GM12878 (cell line): ENCODE measurements at regions of chr14 and their contacts with region 1.

Region 1: GRCh38 chr14:24978862-24979724 is 70.9 kb downstream of the STXBP6 start:
- DNase-seq: peak; percentile 46
- ATAC-seq: peak; percentile 81
- H3K4me3 ChIP-seq: no peak overlapping the region
- H3K27ac ChIP-seq: peak overlapping the region; percentile 18; the same call in 1 of the 2 replicates
- H3K4me1 ChIP-seq: peaks cover 5% of the 10 kb centered on the region; the same call in 1 of the 2 replicates
- H3K27me3 ChIP-seq: no peaks in the 10 kb centered on the region
- CTCF ChIP-seq: no peak
- EP300 ChIP-seq: peak; percentile 21 to 66; a peak in 2 of 4 replicates
- POLR2A ChIP-seq: no peak
- RAD21 ChIP-seq: no peak

Region 2: DNA sequence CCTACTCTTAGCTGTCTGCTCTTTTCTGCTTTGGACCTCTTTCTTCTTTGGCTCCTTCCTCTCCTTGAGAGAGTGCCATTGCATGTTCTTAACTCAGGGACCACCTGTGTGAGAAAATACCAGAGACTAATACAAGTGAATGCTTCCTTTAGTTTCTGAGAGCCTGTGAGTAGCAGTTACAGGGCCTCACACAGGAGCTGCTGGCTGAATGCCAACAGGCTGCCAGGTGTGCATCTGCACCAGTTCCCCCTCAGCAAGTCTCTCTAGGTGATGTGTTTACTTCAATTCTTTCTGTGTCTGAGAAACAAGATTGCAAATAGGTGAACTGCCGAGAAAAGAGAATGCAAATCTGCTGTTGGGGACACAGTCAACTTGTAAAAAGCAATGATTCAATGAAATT is 37.4 kb before region 1 on chr14:
- CTCF ChIA-PET with region 1: interaction called, 3 read pairs
- POLR2A ChIA-PET with region 1: no interaction called
- RAD21 ChIA-PET with region 1: interaction called, 12 read pairs
- SMC1A ChIA-PET with region 1: interaction called, 44 read pairs
- in situ Hi-C with region 1: no loop called
- intact Hi-C with region 1: loop called (anchors 5 kb)
- DNase-seq: no peak
- ATAC-seq: peak; percentile 36
- H3K4me3 ChIP-seq: no peak overlapping the region
- H3K27ac ChIP-seq: peak overlapping the region; percentile 30; the same call in 1 of the 2 replicates
- H3K4me1 ChIP-seq: no peaks in the 10 kb centered on the region; the same call in none of the 2 replicates
- H3K27me3 ChIP-seq: no peaks in the 10 kb centered on the region
- CTCF ChIP-seq: no peak
- EP300 ChIP-seq: no peak
- POLR2A ChIP-seq: no peak
- RAD21 ChIP-seq: no peak

Region 3: GRCh38 chr14:24959791-24960331 is 19.2 kb before region 1 on chr14:
- CTCF ChIA-PET with region 1: interaction called, 21 read pairs
- POLR2A ChIA-PET with region 1: interaction called, 13 read pairs
- RAD21 ChIA-PET with region 1: interaction called, 72 read pairs
- SMC1A ChIA-PET with region 1: interaction called, 390 read pairs
- in situ Hi-C with region 1: no loop called
- intact Hi-C with region 1: no loop called
- DNase-seq: no peak
- ATAC-seq: peak; percentile 77
- H3K4me3 ChIP-seq: no peak overlapping the region
- H3K27ac ChIP-seq: 0 out of 2 replicates have a peak overlapping the region, but pooled peaks have one; percentile 31
- H3K4me1 ChIP-seq: peaks cover under 1% of the 10 kb centered on the region
- H3K27me3 ChIP-seq: no peaks in the 10 kb centered on the region
- CTCF ChIP-seq: no peak
- EP300 ChIP-seq: peak in 1 of 2 experiments; percentile 27; a peak in 1 of 4 replicates
- POLR2A ChIP-seq: no peak
- RAD21 ChIP-seq: no peak

Region 4: GRCh38 chr14:24992624-24993360 is 13.7 kb after region 1 on chr14:
- CTCF ChIA-PET with region 1: interaction called, 10 read pairs
- POLR2A ChIA-PET with region 1: interaction called, 6 read pairs
- RAD21 ChIA-PET with region 1: interaction called, 18 read pairs
- SMC1A ChIA-PET with region 1: interaction called, 39 read pairs
- in situ Hi-C with region 1: no loop called
- intact Hi-C with region 1: no loop called
- DNase-seq: no peak
- ATAC-seq: peak; percentile 69
- H3K4me3 ChIP-seq: no peak overlapping the region
- H3K27ac ChIP-seq: no peak overlapping the region
- H3K4me1 ChIP-seq: no peaks in the 10 kb centered on the region; the same call in 1 of the 2 replicates
- H3K27me3 ChIP-seq: no peaks in the 10 kb centered on the region
- CTCF ChIP-seq: peak in 1 of 3 experiments; percentile 25; a peak in 1 of 6 replicates
- EP300 ChIP-seq: no peak
- POLR2A ChIP-seq: no peak
- RAD21 ChIP-seq: no peak

Region 5: DNA sequence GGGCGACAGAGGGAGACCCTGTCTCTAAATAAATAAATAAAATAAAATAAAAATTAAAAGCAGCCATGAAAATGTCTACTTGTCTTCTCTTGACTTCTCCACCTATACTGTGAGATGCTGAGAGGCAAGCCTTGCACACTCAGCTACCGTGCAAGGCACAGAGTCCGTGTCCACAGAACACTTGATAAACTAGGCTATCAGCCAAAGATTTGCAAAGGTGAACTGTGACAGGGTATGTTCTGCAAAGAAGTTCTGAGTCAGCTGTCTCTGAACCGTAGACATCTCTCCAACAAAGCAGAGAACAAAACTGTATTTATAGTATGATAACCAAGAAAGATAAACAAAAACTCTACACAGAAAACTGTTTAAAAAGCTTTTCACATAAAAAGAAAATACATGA is 35.3 kb after region 1 on chr14:
- CTCF ChIA-PET with region 1: interaction called, 3 read pairs
- POLR2A ChIA-PET with region 1: no interaction called
- RAD21 ChIA-PET with region 1: interaction called, 11 read pairs
- SMC1A ChIA-PET with region 1: interaction called, 118 read pairs
- in situ Hi-C with region 1: no loop called
- intact Hi-C with region 1: no loop called
- DNase-seq: no peak
- ATAC-seq: peak; percentile 37
- H3K4me3 ChIP-seq: no peak overlapping the region
- H3K27ac ChIP-seq: no peak overlapping the region
- H3K4me1 ChIP-seq: no peaks in the 10 kb centered on the region
- H3K27me3 ChIP-seq: no peaks in the 10 kb centered on the region
- CTCF ChIP-seq: no peak
- EP300 ChIP-seq: no peak
- POLR2A ChIP-seq: no peak
- RAD21 ChIP-seq: no peak

Region 6: DNA sequence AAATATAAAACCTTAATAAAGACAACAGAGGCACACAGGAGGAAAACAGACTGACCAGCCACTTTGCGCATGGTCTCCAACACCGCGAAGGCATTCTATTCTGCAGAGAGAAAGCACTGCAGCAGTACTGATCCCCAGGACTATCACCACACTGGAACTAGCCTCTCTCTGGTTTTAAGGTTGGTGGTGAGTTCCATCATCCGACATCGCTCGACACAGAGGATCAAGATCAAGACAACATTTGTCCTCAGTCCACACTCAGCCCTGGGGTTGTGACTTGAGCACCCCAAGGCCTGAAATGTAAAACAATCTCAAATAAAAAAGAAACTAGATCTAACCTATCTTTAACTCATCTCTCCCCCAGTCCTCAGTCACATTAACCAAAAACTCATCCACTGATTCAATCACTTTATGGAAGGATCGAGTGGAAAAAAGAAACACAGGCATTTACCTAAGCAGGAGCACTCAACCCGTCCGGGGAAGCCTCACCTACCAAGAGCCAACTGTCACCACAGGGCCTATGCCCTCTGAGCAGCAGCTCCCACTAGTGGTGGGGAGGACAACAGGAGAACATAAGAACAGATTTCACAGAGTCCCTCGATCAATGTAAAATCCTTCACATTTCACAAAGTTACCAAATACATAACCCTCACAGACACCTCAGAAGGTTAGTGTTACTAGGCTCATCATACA is 53.1 kb after region 1 on chr14:
- CTCF ChIA-PET with region 1: interaction called, 23 read pairs
- POLR2A ChIA-PET with region 1: interaction called, 5 read pairs
- RAD21 ChIA-PET with region 1: interaction called, 26 read pairs
- SMC1A ChIA-PET with region 1: interaction called, 46 read pairs
- in situ Hi-C with region 1: no loop called
- intact Hi-C with region 1: loop called (anchors 2 kb)
- DNase-seq: no peak
- ATAC-seq: peak; percentile 93
- H3K4me3 ChIP-seq: no peak overlapping the region
- H3K27ac ChIP-seq: no peak overlapping the region
- H3K4me1 ChIP-seq: no peaks in the 10 kb centered on the region
- H3K27me3 ChIP-seq: no peaks in the 10 kb centered on the region
- CTCF ChIP-seq: peak; percentile 51 to 80 (median 66)
- EP300 ChIP-seq: no peak; a peak in 1 of 4 replicates
- POLR2A ChIP-seq: no peak
- RAD21 ChIP-seq: no peak